Vagina (tissue), 2 donors: ENCODE measurements at regions of chr11 and their contacts with region 1.

Region 1: GRCh38 chr11:44564670-44565210 is 723 bp upstream of the CD82 start:
- DNase-seq: peak in 1 of 2 donors; percentile 97
- H3K4me3 ChIP-seq: peak overlapping the region; percentile 41 to 62
- H3K27ac ChIP-seq: peak overlapping the region; percentile 93
- H3K4me1 ChIP-seq: peaks cover 71% of the 10 kb centered on the region
- H3K27me3 ChIP-seq: no peaks in the 10 kb centered on the region
- CTCF ChIP-seq: peak in 1 of 3 experiments; percentile 7
- POLR2A ChIP-seq: peak in 1 of 2 donors; percentile 77

Region 2: DNA sequence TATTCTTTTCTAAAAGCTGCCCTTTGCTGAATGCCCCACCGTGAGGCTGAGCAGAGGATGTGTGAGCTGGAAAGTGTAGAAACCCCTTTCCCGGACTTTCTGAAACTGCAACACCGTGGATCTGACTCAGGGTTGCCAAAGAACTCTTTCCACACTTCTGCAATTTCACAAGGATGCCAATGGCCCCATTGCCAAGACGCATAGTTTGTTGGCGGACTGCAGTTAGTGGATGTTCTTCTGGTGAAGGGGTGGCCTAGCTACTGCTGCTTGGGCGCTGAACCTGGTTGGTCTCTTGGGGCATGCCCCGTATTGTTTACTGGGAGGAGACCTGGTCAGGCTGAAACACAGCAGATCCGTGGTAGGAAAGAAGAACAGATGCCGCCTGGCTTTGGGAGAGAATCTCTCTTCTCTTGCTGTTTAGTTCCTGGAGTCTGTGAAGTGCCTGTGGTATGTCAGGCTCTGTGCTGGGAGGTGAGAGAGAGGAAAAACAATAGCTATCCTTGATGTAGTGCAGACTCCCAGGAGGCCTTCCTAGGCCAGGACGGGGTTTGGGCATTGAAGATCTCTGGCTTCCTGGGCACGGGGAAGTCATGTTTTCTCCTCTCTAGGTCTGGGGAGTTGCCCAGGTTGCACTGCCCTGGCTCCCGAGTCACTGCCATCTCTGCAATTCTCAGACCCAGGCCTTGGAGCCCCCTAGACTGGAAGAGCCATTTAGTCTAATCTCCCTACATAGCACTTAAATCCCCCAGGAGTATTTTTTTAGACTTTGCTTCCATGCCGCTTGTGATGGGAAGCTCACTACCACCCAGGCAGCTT is 27.6 kb after region 1 on chr11:
- intact Hi-C with region 1: no loop called
- DNase-seq: no peak
- H3K4me3 ChIP-seq: no peak overlapping the region
- H3K27ac ChIP-seq: peak overlapping the region; percentile 36
- H3K4me1 ChIP-seq: peaks cover 30% of the 10 kb centered on the region
- H3K27me3 ChIP-seq: no peaks in the 10 kb centered on the region
- CTCF ChIP-seq: no peak
- POLR2A ChIP-seq: no peak

Region 3: DNA sequence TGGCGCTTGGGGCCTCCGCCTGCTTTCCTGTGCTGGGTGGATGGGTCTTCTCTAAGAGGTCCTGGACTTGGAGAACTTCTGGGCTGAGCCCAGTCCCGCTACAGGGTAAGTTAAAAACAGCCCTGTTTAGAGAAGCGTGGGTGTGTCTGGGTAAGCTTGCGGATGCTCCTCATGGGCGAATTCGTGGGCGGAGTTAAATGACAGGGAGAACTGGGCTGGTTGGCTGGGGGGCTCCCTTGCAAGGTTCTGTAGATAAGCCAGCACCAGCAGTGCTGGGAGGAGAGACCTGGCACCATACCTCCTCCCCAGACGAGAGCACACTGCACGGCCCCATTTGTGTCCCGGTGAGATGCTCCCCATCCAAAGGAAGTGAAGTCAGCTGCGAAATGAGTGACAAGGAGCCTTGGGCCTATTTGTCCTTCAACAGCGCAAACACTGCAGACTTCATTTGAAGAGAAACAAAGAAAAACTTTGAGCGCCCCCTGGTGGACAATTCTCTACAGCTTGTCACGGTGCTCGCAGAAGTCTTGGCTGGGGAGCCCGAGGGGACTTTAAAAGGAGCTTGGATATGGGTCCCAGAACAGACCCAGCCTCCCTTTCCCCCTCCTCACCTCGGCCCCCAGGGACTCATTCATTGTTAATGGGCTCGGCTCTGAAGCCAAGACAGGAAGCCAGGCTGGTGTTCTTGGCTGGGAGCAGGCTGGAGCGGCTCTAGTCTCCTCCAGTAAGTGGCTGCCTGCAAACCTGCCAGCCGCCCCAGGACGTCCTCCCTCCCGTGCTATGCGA is 346.5 kb after region 1 on chr11:
- intact Hi-C with region 1: loop called (anchors 5 kb)
- DNase-seq: no peak
- H3K4me3 ChIP-seq: no peak overlapping the region
- H3K27ac ChIP-seq: no peak overlapping the region
- H3K4me1 ChIP-seq: no peaks in the 10 kb centered on the region
- H3K27me3 ChIP-seq: no peaks in the 10 kb centered on the region
- CTCF ChIP-seq: peak; percentile 87 to 96 (median 90)
- POLR2A ChIP-seq: no peak